ENCODE measurements at regions of chr10 and their contacts with region 1.

Region 1: DNA sequence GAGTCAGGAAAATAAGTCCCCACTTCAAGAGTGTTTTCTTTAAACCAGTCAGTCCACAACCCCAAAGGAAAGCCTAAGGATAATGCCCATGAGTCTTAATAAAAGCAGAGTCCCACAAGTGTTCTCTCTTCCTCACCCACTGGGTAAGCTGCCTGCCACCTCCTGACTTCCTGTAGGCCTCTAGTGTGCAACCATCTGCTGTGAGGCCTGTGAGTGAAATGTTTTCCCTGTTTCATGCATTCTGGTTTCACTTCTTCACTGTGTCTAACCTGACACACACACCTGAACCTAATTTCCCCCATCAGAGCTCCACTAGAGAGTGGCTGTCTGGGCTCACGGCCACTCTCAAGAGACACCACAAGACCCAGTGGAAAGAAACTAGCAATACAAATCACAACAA is 38.9 kb upstream of the GDF10 start:
- DNase-seq: peak; percentile 71
- H3K4me3 Mint-ChIP-seq: peak overlapping the region; percentile 41
- H3K27ac Mint-ChIP-seq: peak overlapping the region; percentile 98
- H3K4me1 Mint-ChIP-seq: peaks cover 94% of the 10 kb centered on the region
- H3K27me3 Mint-ChIP-seq: no peaks in the 10 kb centered on the region

Region 2: GRCh38 chr10:47121341-47121740 is 139.8 kb before region 1 on chr10:
- CTCF ChIA-PET with region 1: no interaction called
- intact Hi-C with region 1: no loop called
- DNase-seq: no peak
- H3K4me3 Mint-ChIP-seq: no peak overlapping the region
- H3K27ac Mint-ChIP-seq: no peak overlapping the region
- H3K4me1 Mint-ChIP-seq: no peaks in the 10 kb centered on the region
- H3K27me3 Mint-ChIP-seq: no peaks in the 10 kb centered on the region

Region 3: DNA sequence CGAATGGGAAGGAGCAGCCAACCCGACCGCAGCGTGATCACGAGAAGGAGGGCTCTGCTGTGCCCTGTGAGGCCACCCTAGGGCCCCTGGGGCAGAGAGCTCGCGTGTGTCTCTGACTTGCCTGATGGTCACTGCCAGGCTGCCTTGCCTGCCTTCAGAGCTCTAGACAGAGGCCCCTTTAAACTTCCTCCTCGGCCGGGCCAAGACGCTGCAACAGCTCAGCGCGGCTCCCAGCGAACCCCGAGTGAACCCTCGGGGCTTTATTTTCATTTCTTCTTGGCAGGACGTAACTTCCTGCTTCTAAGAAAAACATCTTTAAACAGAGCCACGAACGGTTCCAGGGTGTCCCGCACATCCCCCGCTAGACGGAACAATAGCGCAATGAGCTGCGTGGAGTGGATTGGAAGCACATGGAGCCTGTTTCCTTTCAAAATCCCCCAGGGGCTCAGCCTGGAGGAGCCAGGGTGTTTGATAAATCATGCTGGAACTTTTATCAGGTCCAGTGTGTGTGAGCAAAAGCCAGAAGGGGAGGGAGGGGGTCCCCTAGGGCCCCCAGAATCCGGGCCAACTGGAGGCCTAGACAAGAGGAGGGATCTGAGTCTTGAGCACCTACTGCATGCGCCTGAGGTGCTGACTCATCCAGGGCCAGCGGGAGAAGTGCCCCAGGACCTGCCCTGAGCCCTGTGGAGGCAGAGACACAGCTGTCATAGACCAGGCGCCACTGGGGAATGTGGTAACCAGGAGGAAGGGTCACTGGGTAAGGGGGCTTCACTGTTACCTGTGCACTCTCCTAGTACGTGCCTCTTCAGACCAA is 95.2 kb before region 1 on chr10:
- CTCF ChIA-PET with region 1: interaction called, 3 read pairs
- intact Hi-C with region 1: loop called (anchors 2 kb)
- DNase-seq: peak; percentile 62
- H3K4me3 Mint-ChIP-seq: peak overlapping the region; percentile 66
- H3K27ac Mint-ChIP-seq: peak overlapping the region; percentile 87
- H3K4me1 Mint-ChIP-seq: peaks cover 24% of the 10 kb centered on the region
- H3K27me3 Mint-ChIP-seq: no peaks in the 10 kb centered on the region

Region 4: GRCh38 chr10:47207281-47207615 is 53.9 kb before region 1 on chr10:
- CTCF ChIA-PET with region 1: interaction called, 3 read pairs
- intact Hi-C with region 1: loop called (anchors 1 kb)
- DNase-seq: peak; percentile 44
- H3K4me3 Mint-ChIP-seq: peak overlapping the region; percentile 36
- H3K27ac Mint-ChIP-seq: peak overlapping the region; percentile 85
- H3K4me1 Mint-ChIP-seq: peaks cover 53% of the 10 kb centered on the region
- H3K27me3 Mint-ChIP-seq: no peaks in the 10 kb centered on the region

Region 5: DNA sequence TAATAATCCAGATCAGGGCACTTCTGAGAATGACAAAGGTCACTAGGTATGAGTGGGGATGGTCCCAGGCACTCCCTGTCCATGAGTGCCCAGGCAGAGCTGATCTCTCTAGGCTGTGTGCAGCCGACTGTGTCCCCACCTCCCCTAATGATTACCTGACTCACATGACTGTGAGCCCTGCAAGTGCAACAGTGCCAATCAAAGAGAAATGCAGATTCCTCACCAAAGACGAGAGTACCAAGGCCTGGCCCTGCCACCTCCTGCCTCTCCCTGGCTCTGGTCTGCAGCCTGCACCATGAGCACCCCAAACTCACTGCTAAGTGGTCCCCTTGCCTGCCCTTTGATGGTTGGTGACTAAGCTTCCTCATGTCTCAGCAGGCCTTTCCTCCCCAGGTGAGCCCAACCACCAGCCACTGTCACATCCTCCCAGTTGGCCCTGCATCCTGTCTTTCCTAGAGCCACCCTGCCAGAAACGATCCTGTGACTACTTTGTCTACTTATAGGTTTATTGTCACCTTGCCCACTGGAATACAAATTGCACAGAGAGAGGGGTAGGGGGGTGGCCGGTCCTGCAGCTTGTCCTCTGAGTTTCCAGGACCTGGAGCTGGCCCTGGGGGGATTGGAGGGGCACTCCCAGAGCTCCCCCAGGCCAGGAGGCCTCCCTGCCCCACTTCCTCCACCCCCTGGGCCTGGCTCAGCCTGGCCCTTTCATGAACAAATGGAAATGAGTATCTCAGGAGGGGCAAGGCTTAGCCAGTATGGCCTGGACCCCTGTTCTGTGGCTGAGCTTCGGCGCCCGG is 16.4 kb after region 1 on chr10:
- CTCF ChIA-PET with region 1: interaction called, 3 read pairs
- intact Hi-C with region 1: loop called (anchors 1 kb)
- DNase-seq: peak; percentile 82
- H3K4me3 Mint-ChIP-seq: no peak overlapping the region
- H3K27ac Mint-ChIP-seq: no peak overlapping the region
- H3K4me1 Mint-ChIP-seq: peaks cover 26% of the 10 kb centered on the region
- H3K27me3 Mint-ChIP-seq: no peaks in the 10 kb centered on the region

Region 6: GRCh38 chr10:47287365-47287802 is 26.3 kb after region 1 on chr10:
- CTCF ChIA-PET with region 1: interaction called, 3 read pairs
- intact Hi-C with region 1: loop called (anchors 2 kb)
- DNase-seq: no peak
- H3K4me3 Mint-ChIP-seq: no peak overlapping the region
- H3K27ac Mint-ChIP-seq: no peak overlapping the region
- H3K4me1 Mint-ChIP-seq: peaks cover 29% of the 10 kb centered on the region
- H3K27me3 Mint-ChIP-seq: no peaks in the 10 kb centered on the region

Region 7: GRCh38 chr10:48306265-48306869 is 1045.2 kb after region 1 on chr10 and contains the start of gene MAPK8:
- CTCF ChIA-PET with region 1: no interaction called
- intact Hi-C with region 1: loop called (anchors 10 kb)
- DNase-seq: peak; percentile 90
- H3K4me3 Mint-ChIP-seq: peak within 1 kb of the TSS; percentile 80
- H3K27ac Mint-ChIP-seq: peak within 1 kb of the TSS; percentile 58
- H3K4me1 Mint-ChIP-seq: peaks cover 30% of the 10 kb centered on the region
- H3K27me3 Mint-ChIP-seq: no peaks in the 10 kb centered on the region
- total RNA-seq, gene MAPK8: 29.7 to 36.2 TPM